GM10248 (cell line): ENCODE measurements at regions of chr2 and their contacts with region 1.

Region 1: DNA sequence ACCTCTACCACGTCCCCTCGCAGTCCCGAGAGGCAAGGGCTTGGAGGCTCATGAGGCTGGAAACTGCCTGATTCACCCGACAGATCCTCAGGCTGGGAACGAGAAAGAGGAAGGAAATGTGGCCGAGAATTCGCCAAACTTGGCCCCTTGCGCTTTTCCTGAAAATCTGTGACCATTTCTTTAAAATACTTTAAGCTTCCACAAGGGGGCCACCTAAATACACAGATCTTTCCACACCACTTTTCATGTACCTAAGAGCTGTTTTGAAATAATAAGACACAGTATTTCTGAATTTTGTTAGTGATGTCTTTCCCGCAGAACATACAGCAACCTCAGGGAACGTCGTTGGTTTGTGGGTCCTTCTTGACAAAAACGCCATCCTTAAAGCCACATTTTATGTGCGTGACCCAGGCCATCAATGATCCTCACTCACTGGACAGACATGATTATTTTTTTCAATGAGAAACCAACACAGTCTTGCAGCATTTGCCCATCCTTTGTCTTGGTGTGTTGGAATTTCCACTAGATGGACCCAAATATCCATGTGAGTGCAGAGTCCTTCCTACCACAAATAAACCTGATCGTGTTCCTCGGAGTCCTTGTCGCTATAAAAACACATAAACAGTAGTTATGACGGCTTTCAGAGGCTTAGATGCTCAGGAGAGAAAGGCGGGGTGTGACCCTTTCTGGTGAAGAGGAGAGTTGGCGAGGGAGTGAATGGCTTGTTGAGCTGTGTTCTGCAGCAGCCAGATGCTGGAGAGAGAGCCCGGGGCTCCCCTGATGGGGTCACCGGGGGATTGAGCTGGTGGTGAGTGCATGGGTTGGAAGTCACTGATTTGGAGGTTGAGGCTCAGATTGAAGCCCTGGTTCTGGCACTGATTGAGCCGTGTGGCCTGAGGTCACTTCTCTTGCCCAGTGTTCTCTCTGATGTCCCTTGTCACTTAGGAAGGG is 25.0 kb downstream of the DCDC2C start:
- DNase-seq: peak; percentile 57
- CTCF ChIP-seq: peak; percentile 33

Region 2: DNA sequence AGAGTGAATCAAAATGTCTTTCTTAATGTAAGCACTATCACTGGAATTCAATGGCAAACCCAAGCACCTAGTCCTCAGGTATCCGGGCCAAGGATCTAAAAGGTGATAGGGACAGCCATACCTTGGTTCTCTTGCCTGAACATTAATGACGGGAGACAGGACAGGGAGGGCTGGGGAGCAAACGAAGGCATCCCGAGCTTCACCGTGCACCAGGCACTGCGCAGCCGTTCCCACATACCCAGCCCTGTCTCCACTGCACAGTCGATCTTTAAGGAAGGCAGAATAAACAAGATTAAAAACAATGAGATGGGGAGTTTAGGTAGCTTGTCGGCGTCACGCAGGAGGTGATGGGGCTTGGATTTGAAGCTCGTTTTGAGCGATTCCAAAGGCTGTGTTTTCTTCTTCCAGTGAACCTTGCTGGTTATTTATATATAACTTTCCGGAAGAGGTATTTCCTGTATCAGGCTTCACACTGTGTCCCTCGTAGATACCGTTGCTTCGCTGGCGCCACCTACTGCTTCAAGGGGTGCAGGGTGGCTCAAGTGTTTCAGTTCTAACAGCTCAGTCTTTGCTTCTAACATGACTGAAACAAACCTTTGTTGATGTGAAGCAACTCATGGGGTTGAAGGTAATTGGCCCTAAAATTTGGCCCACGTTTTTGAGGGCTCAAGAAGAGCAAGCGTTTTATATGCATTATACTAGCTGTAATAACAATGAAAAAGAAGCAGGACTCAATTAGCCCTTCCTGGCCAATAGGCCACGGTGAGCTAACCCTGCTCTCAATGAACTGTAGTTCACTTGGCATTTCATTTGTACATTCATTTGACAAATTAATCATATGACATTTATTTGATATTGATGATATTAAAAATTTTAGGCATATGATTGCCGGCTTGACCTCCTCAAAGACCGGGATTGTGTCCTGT is 52.4 kb after region 1 on chr2:
- CTCF ChIA-PET with region 1: interaction called, 25 read pairs
- POLR2A ChIA-PET with region 1: no interaction called
- DNase-seq: peak; percentile 80
- CTCF ChIP-seq: peak; percentile 58

Region 3: DNA sequence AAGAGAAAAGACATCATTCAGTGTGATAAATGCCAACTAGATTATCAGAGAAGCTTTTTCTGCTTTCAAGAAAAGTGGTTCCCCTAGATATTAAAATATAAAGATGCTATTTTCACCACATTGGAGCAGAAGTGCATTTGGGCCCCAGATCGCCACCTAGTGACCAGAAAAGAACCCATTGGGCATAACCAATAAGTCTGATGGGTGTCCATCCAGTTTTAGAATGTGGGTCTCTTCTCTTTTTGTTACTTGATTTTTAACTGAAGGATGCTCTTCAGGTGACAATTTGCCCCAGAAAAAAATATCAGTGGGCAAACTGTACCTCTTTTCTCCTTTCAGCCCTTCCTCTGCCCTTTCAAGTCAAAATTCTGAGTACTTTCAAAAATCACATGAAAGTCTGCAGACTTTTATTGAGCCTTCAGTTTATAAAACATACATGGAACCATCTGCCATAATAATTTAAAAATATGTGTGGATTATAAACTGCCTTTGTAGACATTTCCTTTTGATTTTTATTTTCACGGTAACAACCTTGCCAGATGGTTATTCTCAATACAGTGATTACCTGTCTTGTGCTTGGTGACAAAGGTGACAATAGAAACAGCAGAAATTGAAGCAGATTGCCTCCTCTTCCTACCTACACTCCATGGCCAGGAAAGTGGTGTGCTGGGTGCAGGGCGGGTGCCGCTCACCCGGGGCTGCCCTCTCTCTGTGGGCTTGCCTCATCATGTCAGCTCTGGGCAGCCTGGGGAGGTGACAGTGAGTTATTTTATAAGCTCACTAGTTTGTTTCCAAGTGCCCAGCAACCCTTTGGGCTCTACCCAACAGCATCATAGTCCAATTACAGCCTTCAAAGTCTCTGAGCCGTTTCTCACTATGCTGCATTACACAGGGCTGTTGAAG is 99.5 kb after region 1 on chr2:
- CTCF ChIA-PET with region 1: interaction called, 16 read pairs
- POLR2A ChIA-PET with region 1: no interaction called
- DNase-seq: peak; percentile 50
- CTCF ChIP-seq: peak; percentile 64